ENCODE measurements at regions of chr15 and their contacts with region 1.

Region 1: DNA sequence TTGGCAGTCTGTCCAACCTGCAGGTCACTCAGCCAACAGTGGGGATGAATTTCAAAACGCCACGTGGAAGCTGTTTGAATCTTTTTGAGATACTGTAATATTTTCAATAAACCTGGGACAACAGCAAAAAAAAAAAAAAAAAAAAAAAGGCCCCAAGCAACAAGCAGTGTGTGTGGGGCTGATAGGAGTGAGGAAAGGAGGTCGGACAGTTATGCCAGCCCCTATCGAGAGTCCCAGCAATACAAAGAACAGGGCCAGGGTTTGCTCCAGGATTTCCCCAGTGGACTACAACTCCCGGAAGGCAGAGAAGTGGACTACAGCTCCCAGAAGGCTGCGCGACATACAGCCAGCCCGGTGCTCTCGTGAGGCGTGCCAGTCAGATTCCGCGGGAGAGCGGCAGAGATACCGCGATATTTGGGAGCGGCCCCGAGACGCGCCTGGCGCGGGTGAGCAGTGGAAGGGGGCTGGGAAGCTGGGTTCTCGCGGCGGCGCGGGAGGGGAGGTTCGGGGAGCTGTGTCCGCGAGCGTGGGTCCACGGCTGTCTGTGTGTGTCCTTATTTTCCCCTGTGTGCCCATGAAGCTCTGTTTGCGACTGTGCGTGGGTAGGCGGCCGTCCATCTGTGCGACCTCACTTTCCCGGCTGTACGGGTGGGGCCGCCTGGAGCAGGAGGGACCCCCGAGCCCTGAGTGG is at the start of gene PPCDC:
- DNase-seq: peak; percentile 96 to 98 (median 97)
- ATAC-seq: peak; percentile 98
- H3K4me3 ChIP-seq: peak within 1 kb of the TSS; percentile 80
- H3K27ac ChIP-seq: peak within 1 kb of the TSS; percentile 95
- H3K4me1 ChIP-seq: peaks cover 10 to 18% of the 10 kb centered on the region in 2 experiments; a peak in 4 of 5 replicates
- H3K27me3 ChIP-seq: no peaks in the 10 kb centered on the region; a peak in 1 of 5 replicates
- CTCF ChIP-seq: peak in 1 of 3 experiments; percentile 18; a peak in 1 of 6 replicates
- EP300 ChIP-seq: peak; percentile 57
- POLR2A ChIP-seq: peak; percentile 99
- RAD21 ChIP-seq: peak in 1 of 2 experiments; percentile 7; a peak in 1 of 4 replicates
- polyA plus RNA-seq, gene PPCDC: 50.0 to 53.6 TPM

Region 2: GRCh38 chr15:75008629-75009326 is 14.5 kb before region 1 on chr15:
- CTCF ChIA-PET with region 1: no interaction called
- POLR2A ChIA-PET with region 1: interaction called, 18 read pairs
- in situ Hi-C with region 1: no loop called
- intact Hi-C with region 1: no loop called
- DNase-seq: no peak
- ATAC-seq: no peak
- H3K4me3 ChIP-seq: no peak overlapping the region
- H3K27ac ChIP-seq: no peak overlapping the region
- H3K4me1 ChIP-seq: no peaks in the 10 kb centered on the region; a peak in 1 of 5 replicates
- H3K27me3 ChIP-seq: peaks cover 23 to 53% of the 10 kb centered on the region in 2 experiments; a peak in 4 of 5 replicates
- CTCF ChIP-seq: no peak
- EP300 ChIP-seq: no peak
- POLR2A ChIP-seq: no peak
- RAD21 ChIP-seq: no peak

Region 3: DNA sequence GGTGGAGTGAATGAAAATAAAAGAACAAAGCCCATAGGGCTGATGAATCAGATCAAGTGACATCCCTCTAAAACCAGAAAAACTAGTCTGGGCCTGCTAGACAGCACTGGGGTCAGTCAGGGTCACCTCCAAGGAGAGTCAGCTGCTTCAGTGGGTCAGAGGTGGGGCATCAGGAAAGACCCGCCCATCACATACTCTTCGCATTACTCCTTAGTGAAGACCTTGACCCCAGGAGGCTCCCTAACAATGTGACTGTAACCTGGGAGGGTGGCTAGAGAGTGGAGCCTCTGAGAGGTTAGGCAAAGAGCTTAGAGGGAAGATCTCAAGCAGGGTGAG is 13.0 kb after region 1 on chr15:
- CTCF ChIA-PET with region 1: no interaction called
- POLR2A ChIA-PET with region 1: interaction called, 10 read pairs
- in situ Hi-C with region 1: no loop called
- intact Hi-C with region 1: no loop called
- DNase-seq: peak; percentile 40 to 54 (median 46)
- ATAC-seq: peak; percentile 55
- H3K4me3 ChIP-seq: no peak overlapping the region
- H3K27ac ChIP-seq: no peak overlapping the region
- H3K4me1 ChIP-seq: peaks cover 23 to 31% of the 10 kb centered on the region in 2 experiments
- H3K27me3 ChIP-seq: no peaks in the 10 kb centered on the region
- CTCF ChIP-seq: no peak
- EP300 ChIP-seq: no peak
- POLR2A ChIP-seq: no peak
- RAD21 ChIP-seq: no peak

Region 4: GRCh38 chr15:75208501-75209288 is 185.4 kb after region 1 on chr15:
- CTCF ChIA-PET with region 1: interaction called, 76 read pairs
- POLR2A ChIA-PET with region 1: interaction called, 18 read pairs
- in situ Hi-C with region 1: loop called (anchors 5 kb)
- intact Hi-C with region 1: no loop called
- DNase-seq: no peak
- ATAC-seq: no peak
- H3K4me3 ChIP-seq: no peak overlapping the region
- H3K27ac ChIP-seq: no peak overlapping the region
- H3K4me1 ChIP-seq: peaks cover 14 to 26% of the 10 kb centered on the region in 2 experiments; a peak in 4 of 5 replicates
- H3K27me3 ChIP-seq: no peaks in the 10 kb centered on the region
- CTCF ChIP-seq: no peak
- EP300 ChIP-seq: no peak
- POLR2A ChIP-seq: no peak
- RAD21 ChIP-seq: no peak

Region 5: DNA sequence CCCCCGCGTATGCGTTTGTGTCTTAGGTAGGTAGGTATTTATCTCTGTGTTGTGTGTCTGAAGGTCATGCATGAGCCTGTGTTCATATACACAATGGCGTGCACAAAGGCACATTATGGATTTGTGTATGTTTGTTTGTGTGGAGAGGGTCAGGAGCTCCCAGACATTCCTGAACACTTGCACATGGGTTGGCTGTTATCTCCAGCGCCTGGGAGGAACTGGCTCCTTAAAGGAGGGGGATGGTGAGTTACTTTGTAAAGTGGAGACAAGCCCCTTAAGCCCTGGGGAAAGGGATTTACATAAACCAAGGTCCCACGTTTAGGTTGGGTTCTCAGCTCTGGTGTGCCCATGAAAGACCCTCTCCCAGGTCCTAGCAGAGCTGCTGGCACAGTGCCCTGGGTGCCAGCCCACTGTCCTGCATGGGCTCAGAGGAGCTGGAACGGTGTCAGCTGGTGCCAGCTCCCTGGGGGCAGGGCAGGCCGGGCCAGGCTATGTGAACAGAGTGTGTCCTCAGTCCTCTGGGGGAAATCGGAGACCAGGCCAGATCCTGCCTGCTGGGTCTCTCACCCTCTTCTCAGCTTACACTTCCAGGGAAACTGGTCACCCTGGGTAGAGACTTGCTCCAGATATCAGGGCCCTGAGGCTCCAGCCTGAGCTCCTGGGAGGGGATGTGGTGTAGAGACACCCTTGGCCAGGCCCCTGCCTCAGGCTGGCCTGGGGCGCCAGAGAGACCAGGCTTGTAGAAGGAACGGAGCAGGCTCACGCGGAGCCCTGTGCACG is 649.5 kb after region 1 on chr15:
- CTCF ChIA-PET with region 1: no interaction called
- POLR2A ChIA-PET with region 1: no interaction called
- in situ Hi-C with region 1: loop called (anchors 10 kb)
- intact Hi-C with region 1: no loop called
- DNase-seq: no peak
- ATAC-seq: peak; percentile 24
- H3K4me3 ChIP-seq: no peak overlapping the region
- H3K27ac ChIP-seq: no peak overlapping the region
- H3K4me1 ChIP-seq: peaks cover 10 to 57% of the 10 kb centered on the region in 2 experiments; a peak in 4 of 5 replicates
- H3K27me3 ChIP-seq: no peaks in the 10 kb centered on the region
- CTCF ChIP-seq: no peak
- EP300 ChIP-seq: no peak
- POLR2A ChIP-seq: no peak
- RAD21 ChIP-seq: no peak

Region 6: DNA sequence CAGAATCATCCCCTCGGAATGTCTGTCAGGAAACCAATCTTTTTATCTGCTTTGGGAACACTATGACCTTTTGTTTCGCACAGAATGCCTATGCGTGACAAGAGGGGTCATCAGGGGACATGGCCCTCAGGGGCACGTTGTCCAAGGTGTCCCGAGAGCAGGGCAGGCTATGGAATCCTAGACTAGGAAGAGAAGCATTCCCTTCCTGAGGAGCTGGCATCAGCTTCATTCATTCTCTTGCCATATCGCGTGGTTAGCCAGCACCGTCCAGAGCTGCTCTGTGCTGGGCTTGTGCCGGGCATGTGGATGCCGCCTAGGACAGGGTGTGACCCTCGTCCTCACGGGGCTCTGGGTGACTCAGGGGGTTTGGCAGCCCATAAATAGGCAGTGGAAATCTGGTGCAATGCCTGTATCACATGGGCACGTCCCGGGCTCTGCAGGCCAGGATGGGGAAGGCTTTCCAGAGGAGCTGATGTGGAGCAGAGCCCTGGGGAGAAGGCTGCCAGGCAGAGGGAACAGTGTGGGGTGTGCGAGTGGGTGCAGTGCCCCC is 1154.2 kb after region 1 on chr15:
- CTCF ChIA-PET with region 1: no interaction called
- POLR2A ChIA-PET with region 1: no interaction called
- in situ Hi-C with region 1: no loop called
- intact Hi-C with region 1: no loop called
- DNase-seq: no peak
- ATAC-seq: no peak
- H3K4me3 ChIP-seq: no peak overlapping the region
- H3K27ac ChIP-seq: no peak overlapping the region
- H3K4me1 ChIP-seq: no peaks in the 10 kb centered on the region
- H3K27me3 ChIP-seq: peaks cover 61 to 87% of the 10 kb centered on the region in 2 experiments
- CTCF ChIP-seq: no peak
- EP300 ChIP-seq: no peak
- POLR2A ChIP-seq: no peak
- RAD21 ChIP-seq: no peak